AG04449 (cell line): ENCODE measurements at regions of chr9 and their contacts with region 1.

Region 1: GRCh38 chr9:94672811-94673487 is 33.6 kb upstream of the FBP1 start:
- DNase-seq: no peak
- H3K4me3 ChIP-seq: no peak overlapping the region
- CTCF ChIP-seq: no peak

Region 2: GRCh38 chr9:94650949-94651348 is 22.0 kb before region 1 on chr9:
- CTCF ChIA-PET with region 1: interaction called, 12 read pairs
- POLR2A ChIA-PET with region 1: no interaction called
- DNase-seq: no peak
- H3K4me3 ChIP-seq: no peak overlapping the region
- CTCF ChIP-seq: no peak

Region 3: GRCh38 chr9:94656200-94656599 is 16.7 kb before region 1 on chr9:
- CTCF ChIA-PET with region 1: interaction called, 16 read pairs
- POLR2A ChIA-PET with region 1: no interaction called
- DNase-seq: no peak
- H3K4me3 ChIP-seq: no peak overlapping the region
- CTCF ChIP-seq: no peak

Region 4: GRCh38 chr9:94703488-94704140 is 30.7 kb after region 1 on chr9:
- CTCF ChIA-PET with region 1: no interaction called
- POLR2A ChIA-PET with region 1: no interaction called
- DNase-seq: no peak
- H3K4me3 ChIP-seq: no peak overlapping the region
- CTCF ChIP-seq: no peak

Region 5: DNA sequence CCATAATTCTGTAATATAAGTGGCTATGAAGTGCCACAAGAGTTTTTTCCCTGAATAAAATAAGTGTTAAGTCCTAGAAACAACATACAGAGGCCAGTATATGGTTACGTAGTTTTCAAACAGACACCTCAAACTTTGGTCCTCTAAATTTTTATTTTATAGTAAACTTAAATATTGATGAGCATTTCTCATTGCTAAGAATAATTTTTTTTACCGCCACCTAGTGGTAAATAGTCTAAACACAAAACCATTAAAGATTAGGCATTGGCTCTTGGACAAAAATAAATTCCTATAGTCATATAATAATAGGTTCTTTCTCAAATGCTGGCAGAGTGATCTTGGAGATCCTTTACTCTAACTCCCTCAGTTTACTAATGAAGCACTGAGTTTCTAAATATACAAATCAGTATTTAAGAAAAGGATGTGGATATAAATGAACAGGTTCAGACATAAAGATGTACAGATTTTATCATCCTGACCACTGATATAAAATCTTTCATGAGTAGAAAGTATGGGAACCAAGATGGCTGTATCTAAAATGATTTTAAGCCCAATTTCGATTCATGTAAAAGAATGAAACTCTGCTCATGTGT is 508.4 kb after region 1 on chr9:
- CTCF ChIA-PET with region 1: interaction called, 18 read pairs
- POLR2A ChIA-PET with region 1: no interaction called
- DNase-seq: no peak
- H3K4me3 ChIP-seq: no peak overlapping the region
- CTCF ChIP-seq: no peak